ENCODE measurements at regions of chr3 and their contacts with region 1.

Region 1: DNA sequence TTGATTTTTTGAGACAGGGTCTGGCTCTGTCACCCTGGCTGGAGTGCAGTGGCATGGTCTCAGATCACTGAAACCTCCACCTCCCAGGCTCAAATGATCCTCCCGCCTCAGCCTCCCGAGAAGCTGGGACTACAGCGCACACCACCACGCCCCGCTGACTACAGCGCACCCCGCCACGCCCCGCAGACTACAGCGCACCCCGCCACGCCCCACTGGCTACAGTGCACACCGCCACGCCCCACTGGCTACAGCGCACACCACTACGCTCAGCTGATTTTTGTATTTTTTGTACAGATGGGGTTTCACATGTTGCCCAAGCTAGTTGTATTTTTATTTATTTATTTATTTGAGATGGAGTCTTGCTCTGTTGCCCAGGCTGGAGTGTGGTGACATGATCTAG is 35.6 kb downstream of the SLC51A start:
- DNase-seq: no peak
- ATAC-seq: no peak
- H3K4me3 ChIP-seq: no peak overlapping the region
- H3K4me3 Mint-ChIP-seq: no peak overlapping the region
- H3K27ac ChIP-seq: no peak overlapping the region
- H3K27ac Mint-ChIP-seq: no peak overlapping the region
- H3K4me1 ChIP-seq: no peaks in the 10 kb centered on the region
- H3K4me1 Mint-ChIP-seq: peaks cover 0 to 8% (median 2%) of the 10 kb centered on the region in 7 donors
- H3K27me3 ChIP-seq: no peaks in the 10 kb centered on the region
- H3K27me3 Mint-ChIP-seq: no peaks in the 10 kb centered on the region

Region 2: DNA sequence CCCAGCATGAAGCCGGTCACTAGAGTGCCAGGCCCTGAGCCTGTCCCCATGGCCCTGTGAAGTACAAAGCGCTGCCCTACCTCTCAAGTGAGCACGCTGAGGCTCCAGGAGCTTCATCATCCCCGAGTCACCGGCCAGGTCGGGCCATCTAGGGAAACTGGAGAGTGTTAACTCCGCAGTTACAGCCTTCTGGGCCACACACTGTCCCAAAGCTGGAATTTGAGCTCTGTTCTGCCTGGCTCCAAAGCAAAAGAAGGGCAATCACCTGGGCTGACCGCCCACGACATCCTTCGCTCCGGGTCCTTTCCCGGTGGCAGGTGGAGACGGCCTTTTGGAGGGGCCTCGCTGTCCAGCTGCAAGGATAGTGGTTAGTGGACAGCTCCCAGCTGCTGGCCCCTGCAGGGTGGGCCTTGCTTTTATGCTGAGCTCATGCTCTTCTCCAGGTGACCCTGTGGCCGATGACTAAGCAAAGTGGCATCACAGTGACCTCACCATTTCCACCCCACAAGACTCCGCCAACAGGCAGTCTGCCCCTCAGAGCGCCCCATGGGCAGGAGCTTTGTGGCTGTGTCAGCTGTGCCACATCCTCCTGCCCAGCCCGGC is 436.6 kb before region 1 on chr3:
- CTCF ChIA-PET with region 1: no interaction called
- POLR2A ChIA-PET with region 1: no interaction called
- intact Hi-C with region 1: no loop called
- DNase-seq: no peak
- ATAC-seq: no peak
- H3K4me3 ChIP-seq: no peak overlapping the region
- H3K4me3 Mint-ChIP-seq: no peak overlapping the region
- H3K27ac ChIP-seq: no peak overlapping the region
- H3K27ac Mint-ChIP-seq: no peak overlapping the region
- H3K4me1 ChIP-seq: no peaks in the 10 kb centered on the region
- H3K4me1 Mint-ChIP-seq: peaks cover 0 to 15% (median 4%) of the 10 kb centered on the region in 7 donors
- H3K27me3 ChIP-seq: no peaks in the 10 kb centered on the region
- H3K27me3 Mint-ChIP-seq: peaks cover 0 to 3% (median 0%) of the 10 kb centered on the region in 5 donors

Region 3: DNA sequence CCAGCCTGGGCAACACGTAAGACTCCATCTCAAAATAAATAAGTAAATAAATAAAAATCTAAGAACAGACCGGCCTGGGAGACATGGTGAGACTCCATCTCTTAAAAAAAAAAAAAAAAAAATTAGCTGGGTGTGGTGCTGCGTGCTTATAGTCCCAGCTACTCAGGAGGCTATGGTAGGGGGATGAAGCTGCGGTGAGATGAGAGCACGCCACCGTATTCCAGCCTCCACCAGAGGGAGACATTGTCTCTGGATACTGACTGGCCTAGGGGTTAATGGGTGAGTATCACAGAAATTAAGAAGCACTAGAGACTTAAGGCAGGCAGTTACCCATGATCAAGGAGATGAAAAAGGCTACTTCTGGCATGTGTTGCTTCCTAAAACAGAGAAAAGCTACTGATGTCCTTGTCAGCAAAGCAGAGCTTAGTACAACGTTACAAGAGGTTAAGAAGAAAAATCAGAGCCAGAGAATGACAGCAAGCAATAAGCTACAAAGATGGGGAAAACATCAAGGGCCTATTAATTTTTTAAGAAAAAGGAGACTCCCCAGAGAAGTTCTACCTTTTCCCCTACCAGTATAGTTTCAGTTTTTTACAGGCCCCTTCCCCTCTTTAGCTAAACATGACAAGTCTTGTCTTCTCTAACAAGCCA is 178.6 kb before region 1 on chr3:
- CTCF ChIA-PET with region 1: no interaction called
- POLR2A ChIA-PET with region 1: no interaction called
- intact Hi-C with region 1: loop called in 1 of 2 experiments (anchors 1 kb)
- DNase-seq: peak; percentile 33 to 81 (median 75)
- ATAC-seq: peak; percentile 100
- H3K4me3 ChIP-seq: no peak overlapping the region
- H3K4me3 Mint-ChIP-seq: peak overlapping the region in 1 of 10 donors; percentile 44
- H3K27ac ChIP-seq: no peak overlapping the region
- H3K27ac Mint-ChIP-seq: peak overlapping the region in 6 of 9 donors; percentile 4 to 82 (median 54)
- H3K4me1 ChIP-seq: peaks cover 7% of the 10 kb centered on the region in 2 donors
- H3K4me1 Mint-ChIP-seq: peaks cover 13 to 53% (median 18%) of the 10 kb centered on the region in 7 donors
- H3K27me3 ChIP-seq: no peaks in the 10 kb centered on the region
- H3K27me3 Mint-ChIP-seq: no peaks in the 10 kb centered on the region

Region 4: GRCh38 chr3:196287440-196288148 is 35.7 kb after region 1 on chr3 and contains the start of gene PCYT1A:
- CTCF ChIA-PET with region 1: no interaction called
- POLR2A ChIA-PET with region 1: no interaction called
- intact Hi-C with region 1: loop called in 1 of 2 experiments (anchors 1 kb)
- DNase-seq: peak; percentile 48 to 75 (median 65)
- ATAC-seq: peak; percentile 93
- H3K4me3 ChIP-seq: peak within 1 kb of the TSS; percentile 99
- H3K4me3 Mint-ChIP-seq: peak within 1 kb of the TSS; percentile 98 to 100 (median 99)
- H3K27ac ChIP-seq: peak within 1 kb of the TSS; percentile 84
- H3K27ac Mint-ChIP-seq: peak within 1 kb of the TSS; percentile 92 to 98 (median 97)
- H3K4me1 ChIP-seq: peaks cover 12 to 15% of the 10 kb centered on the region in 2 donors
- H3K4me1 Mint-ChIP-seq: peaks cover 20 to 56% (median 46%) of the 10 kb centered on the region in 7 donors
- H3K27me3 ChIP-seq: no peaks in the 10 kb centered on the region
- H3K27me3 Mint-ChIP-seq: peaks cover 0 to 2% (median 0%) of the 10 kb centered on the region in 5 donors
- total RNA-seq, gene PCYT1A: 47.5 to 87.6 (median 62.9) TPM

Region 5: GRCh38 chr3:196365736-196366135 is 113.8 kb after region 1 on chr3:
- CTCF ChIA-PET with region 1: interaction called, 5 read pairs
- POLR2A ChIA-PET with region 1: no interaction called
- intact Hi-C with region 1: loop called in 1 of 2 experiments (anchors 5 kb)
- DNase-seq: no peak
- ATAC-seq: no peak
- H3K4me3 ChIP-seq: no peak overlapping the region
- H3K4me3 Mint-ChIP-seq: no peak overlapping the region
- H3K27ac ChIP-seq: no peak overlapping the region
- H3K27ac Mint-ChIP-seq: peak overlapping the region in 3 of 9 donors; percentile 23 to 48 (median 23)
- H3K4me1 ChIP-seq: no peaks in the 10 kb centered on the region
- H3K4me1 Mint-ChIP-seq: peaks cover 0 to 14% (median 0%) of the 10 kb centered on the region in 7 donors
- H3K27me3 ChIP-seq: no peaks in the 10 kb centered on the region
- H3K27me3 Mint-ChIP-seq: no peaks in the 10 kb centered on the region

Region 6: GRCh38 chr3:196454935-196455334 is 203.0 kb after region 1 on chr3:
- CTCF ChIA-PET with region 1: no interaction called
- POLR2A ChIA-PET with region 1: no interaction called
- intact Hi-C with region 1: loop called in 1 of 2 experiments (anchors 10 kb)
- DNase-seq: no peak
- ATAC-seq: no peak
- H3K4me3 ChIP-seq: no peak overlapping the region
- H3K4me3 Mint-ChIP-seq: no peak overlapping the region
- H3K27ac ChIP-seq: no peak overlapping the region
- H3K27ac Mint-ChIP-seq: peak overlapping the region in 1 of 9 donors; percentile 36
- H3K4me1 ChIP-seq: no peaks in the 10 kb centered on the region
- H3K4me1 Mint-ChIP-seq: peaks cover 0 to 13% (median 11%) of the 10 kb centered on the region in 7 donors
- H3K27me3 ChIP-seq: no peaks in the 10 kb centered on the region
- H3K27me3 Mint-ChIP-seq: no peaks in the 10 kb centered on the region

Region 7: DNA sequence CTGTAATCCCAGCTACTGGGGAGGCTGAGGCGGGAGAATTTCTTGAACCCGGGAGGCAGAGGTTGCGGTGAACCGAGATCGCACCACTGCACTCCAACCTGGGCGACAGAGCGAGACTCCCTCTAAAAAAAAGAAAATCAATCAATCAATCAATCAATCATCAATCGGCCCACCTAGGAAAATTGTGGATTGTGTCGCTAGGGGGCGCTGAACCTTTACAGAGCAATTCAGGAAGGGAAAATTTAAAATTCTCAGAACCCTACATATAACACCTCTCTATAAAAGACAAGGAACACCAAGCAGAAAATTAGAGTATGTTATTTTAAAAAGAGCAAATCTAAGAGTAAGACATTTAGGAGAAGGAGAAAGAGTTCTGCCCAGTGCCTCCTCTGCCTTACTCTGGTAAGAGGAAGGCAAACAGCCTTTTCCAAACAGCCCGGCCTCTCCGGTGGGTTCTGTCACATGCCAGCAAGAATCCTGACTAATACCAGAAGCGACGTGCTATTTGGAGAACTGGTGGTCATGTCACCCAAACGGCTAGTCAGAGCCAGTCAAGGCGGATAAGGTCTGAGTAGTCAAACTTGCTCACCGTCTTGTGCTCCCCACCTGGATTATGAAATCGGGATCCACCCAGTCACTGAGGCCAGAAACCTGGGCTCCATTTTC is 285.5 kb after region 1 on chr3:
- CTCF ChIA-PET with region 1: no interaction called
- POLR2A ChIA-PET with region 1: no interaction called
- intact Hi-C with region 1: no loop called
- DNase-seq: peak; percentile 19 to 60 (median 43)
- ATAC-seq: peak; percentile 46
- H3K4me3 ChIP-seq: no peak overlapping the region
- H3K4me3 Mint-ChIP-seq: no peak overlapping the region
- H3K27ac ChIP-seq: no peak overlapping the region
- H3K27ac Mint-ChIP-seq: no peak overlapping the region
- H3K4me1 ChIP-seq: no peaks in the 10 kb centered on the region
- H3K4me1 Mint-ChIP-seq: peaks cover 0 to 8% (median 0%) of the 10 kb centered on the region in 7 donors
- H3K27me3 ChIP-seq: no peaks in the 10 kb centered on the region
- H3K27me3 Mint-ChIP-seq: peaks cover 0 to 14% (median 0%) of the 10 kb centered on the region in 5 donors

Region 8: DNA sequence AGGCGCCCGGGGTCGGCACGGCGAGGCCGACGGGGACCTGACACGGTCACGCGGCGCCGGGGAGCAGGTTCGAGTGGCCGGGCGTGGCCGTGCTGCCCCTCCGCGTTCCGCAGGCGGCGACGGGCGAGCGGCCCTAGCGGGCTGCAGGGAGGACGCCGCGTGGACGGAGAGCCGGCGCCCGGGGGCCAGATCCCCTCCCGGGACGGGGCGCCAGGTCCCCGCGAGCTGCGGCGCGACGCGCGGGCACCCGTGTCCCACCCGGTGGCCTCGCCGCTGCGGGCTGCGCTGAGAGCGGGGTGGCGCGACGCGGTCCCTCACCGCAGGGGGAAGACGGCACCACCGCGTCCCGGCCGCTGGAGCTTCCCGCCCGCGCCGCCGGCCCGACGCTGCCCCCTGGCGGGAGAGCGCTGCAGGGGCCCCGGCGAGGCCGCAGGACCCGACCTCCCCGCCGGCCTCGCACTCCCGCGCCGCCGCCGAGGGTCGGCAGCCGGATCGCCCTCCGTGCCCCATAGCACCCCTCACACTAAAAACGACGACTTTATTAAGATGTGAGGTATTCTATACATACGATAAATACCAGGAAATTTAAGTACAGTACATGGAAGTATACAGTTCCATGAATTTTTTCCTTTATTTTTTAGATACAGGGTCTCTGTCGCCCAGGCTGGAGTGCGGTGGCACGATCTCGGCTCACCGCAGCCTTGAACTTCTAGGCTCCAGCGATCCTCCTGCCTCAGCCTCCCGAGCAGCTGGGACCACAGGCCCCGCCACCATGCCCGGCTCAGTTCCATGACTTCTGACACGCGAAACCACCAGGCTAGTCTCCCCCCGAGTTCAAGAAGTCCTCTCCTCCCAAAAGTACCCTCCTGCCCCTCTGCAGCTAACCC is 718.0 kb after region 1 on chr3:
- CTCF ChIA-PET with region 1: no interaction called
- POLR2A ChIA-PET with region 1: no interaction called
- intact Hi-C with region 1: loop called in 1 of 2 experiments (anchors 1 kb)
- DNase-seq: peak; percentile 43 to 89 (median 66)
- ATAC-seq: peak; percentile 88
- H3K4me3 ChIP-seq: peak overlapping the region; percentile 48
- H3K4me3 Mint-ChIP-seq: peak overlapping the region; percentile 63 to 88 (median 82)
- H3K27ac ChIP-seq: no peak overlapping the region
- H3K27ac Mint-ChIP-seq: peak overlapping the region in 3 of 9 donors; percentile 32 to 53 (median 44)
- H3K4me1 ChIP-seq: no peaks in the 10 kb centered on the region
- H3K4me1 Mint-ChIP-seq: peaks cover 0 to 14% (median 6%) of the 10 kb centered on the region in 7 donors
- H3K27me3 ChIP-seq: no peaks in the 10 kb centered on the region
- H3K27me3 Mint-ChIP-seq: peaks cover 0 to 12% (median 4%) of the 10 kb centered on the region in 5 donors